Heart left ventricle (tissue), 16 donors: ENCODE measurements at regions of chr10 and their contacts with region 1.

Region 1: DNA sequence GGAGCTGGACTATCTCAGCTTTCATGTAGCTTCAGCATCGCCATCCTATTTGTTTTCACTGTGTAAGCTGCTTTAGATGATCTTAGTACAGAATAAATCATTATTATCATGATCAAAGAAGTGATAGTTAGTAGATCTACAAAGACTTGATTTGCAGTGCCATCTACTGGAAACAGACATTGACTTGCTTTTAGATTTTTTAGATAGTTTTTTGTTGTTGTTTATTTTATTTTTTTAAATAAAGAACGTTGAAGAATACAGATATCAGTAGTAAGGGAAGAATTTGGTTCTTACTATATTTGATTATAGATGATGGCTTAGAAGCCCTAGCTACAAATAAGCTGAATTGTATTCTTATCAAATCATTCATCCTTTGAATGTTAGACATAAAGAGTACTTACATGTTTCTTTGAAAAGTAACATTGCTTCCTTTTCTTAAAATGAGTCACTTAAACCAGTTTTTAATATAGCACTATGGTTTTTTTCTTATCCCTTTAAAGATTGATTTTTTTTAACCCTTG is 6.3 kb upstream of the SFMBT2 start:
- DNase-seq: no peak
- ATAC-seq: no peak
- H3K4me3 ChIP-seq: no peak overlapping the region
- H3K27ac ChIP-seq: no peak overlapping the region
- H3K4me1 ChIP-seq: peaks cover 0 to 15% (median 8%) of the 10 kb centered on the region in 12 donors
- H3K27me3 ChIP-seq: peaks cover 0 to 16% (median 4%) of the 10 kb centered on the region in 9 donors
- CTCF ChIP-seq: peak; percentile 39 to 74 (median 64)
- POLR2A ChIP-seq: no peak

Region 2: GRCh38 chr10:6678211-6678803 is 738.9 kb before region 1 on chr10:
- intact Hi-C with region 1: loop called in 5 of 10 experiments (anchors 5 to 10 kb)
- DNase-seq: peak in 3 of 5 donors; percentile 30 to 49 (median 31)
- ATAC-seq: no peak
- H3K4me3 ChIP-seq: no peak overlapping the region
- H3K27ac ChIP-seq: no peak overlapping the region
- H3K4me1 ChIP-seq: peaks cover 0 to 10% (median 0%) of the 10 kb centered on the region in 12 donors
- H3K27me3 ChIP-seq: peaks cover 0 to 6% (median 0%) of the 10 kb centered on the region in 9 donors
- CTCF ChIP-seq: peak; percentile 38 to 78 (median 67)
- POLR2A ChIP-seq: no peak

Region 3: DNA sequence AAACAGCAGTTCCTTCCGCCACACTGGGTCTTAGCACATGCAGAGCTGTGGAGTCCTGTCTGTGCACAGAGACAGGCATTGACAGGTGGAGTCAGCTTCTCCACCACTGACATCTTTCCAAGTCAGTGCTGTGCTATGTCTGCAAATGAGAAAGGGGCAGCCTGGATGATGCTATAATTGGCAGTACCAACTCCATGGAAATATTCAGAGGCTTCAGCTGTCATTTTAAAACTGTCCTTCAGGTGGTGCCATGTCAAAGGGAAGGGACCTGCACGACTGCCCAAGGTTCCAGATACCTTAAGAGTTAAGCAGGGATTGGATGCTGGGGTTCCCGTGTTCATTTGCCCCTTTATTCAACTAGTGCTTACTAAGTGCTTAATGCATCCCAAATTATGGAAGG is 579.0 kb before region 1 on chr10:
- intact Hi-C with region 1: loop called in 1 of 10 experiments (anchors 5 kb)
- DNase-seq: no peak
- ATAC-seq: no peak
- H3K4me3 ChIP-seq: no peak overlapping the region
- H3K27ac ChIP-seq: no peak overlapping the region
- H3K4me1 ChIP-seq: no peaks in the 10 kb centered on the region
- H3K27me3 ChIP-seq: no peaks in the 10 kb centered on the region
- CTCF ChIP-seq: peak in 3 of 12 donors; percentile 19 to 28 (median 22)
- POLR2A ChIP-seq: no peak

Region 4: DNA sequence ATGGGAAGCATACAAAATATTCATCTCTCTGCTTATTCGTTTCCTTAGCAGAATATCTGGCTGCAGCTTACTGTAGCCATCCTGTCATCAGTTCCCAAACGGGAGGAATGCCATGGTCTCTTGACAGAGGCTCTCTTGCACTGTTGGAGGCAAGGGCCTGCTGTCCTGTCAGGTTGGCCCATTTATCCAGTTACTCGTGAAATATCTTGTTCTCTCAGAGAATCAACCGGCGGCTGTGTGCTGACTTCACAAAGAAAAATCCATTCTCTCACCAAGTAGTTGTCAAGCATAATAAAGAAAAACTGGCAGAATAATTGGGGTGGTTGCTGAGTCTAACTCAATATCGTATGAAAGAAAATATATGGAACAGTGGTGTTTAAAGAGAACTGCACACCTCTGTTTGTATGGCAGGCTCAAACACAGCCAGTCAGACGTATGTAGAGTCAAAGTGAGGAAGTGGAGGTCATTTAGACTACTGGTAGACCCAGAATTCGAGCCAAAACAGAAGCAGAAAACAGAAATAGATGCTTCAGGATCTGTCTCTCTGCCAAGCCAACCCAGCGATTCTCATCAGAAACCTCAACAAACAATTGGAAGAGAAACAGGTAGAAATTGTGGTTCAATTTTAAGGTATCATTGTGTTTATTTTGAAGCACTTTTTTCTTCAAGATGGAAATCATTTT is 487.9 kb before region 1 on chr10:
- intact Hi-C with region 1: loop called in 7 of 10 experiments (anchors 5 to 10 kb)
- DNase-seq: no peak
- ATAC-seq: peak in 1 of 4 donors; percentile 54
- H3K4me3 ChIP-seq: no peak overlapping the region
- H3K27ac ChIP-seq: peak overlapping the region in 1 of 12 donors; percentile 63
- H3K4me1 ChIP-seq: peaks cover 0 to 44% (median 2%) of the 10 kb centered on the region in 12 donors
- H3K27me3 ChIP-seq: peaks cover 0 to 5% (median 0%) of the 10 kb centered on the region in 9 donors
- CTCF ChIP-seq: no peak
- POLR2A ChIP-seq: no peak

Region 5: GRCh38 chr10:7734821-7735220 is 317.7 kb after region 1 on chr10:
- intact Hi-C with region 1: no loop called
- DNase-seq: no peak
- ATAC-seq: no peak
- H3K4me3 ChIP-seq: no peak overlapping the region
- H3K27ac ChIP-seq: no peak overlapping the region
- H3K4me1 ChIP-seq: no peaks in the 10 kb centered on the region
- H3K27me3 ChIP-seq: no peaks in the 10 kb centered on the region
- CTCF ChIP-seq: no peak
- POLR2A ChIP-seq: no peak